Posterior vena cava (tissue), 2 donors: ENCODE measurements at regions of chr19 and their contacts with region 1.

Region 1: DNA sequence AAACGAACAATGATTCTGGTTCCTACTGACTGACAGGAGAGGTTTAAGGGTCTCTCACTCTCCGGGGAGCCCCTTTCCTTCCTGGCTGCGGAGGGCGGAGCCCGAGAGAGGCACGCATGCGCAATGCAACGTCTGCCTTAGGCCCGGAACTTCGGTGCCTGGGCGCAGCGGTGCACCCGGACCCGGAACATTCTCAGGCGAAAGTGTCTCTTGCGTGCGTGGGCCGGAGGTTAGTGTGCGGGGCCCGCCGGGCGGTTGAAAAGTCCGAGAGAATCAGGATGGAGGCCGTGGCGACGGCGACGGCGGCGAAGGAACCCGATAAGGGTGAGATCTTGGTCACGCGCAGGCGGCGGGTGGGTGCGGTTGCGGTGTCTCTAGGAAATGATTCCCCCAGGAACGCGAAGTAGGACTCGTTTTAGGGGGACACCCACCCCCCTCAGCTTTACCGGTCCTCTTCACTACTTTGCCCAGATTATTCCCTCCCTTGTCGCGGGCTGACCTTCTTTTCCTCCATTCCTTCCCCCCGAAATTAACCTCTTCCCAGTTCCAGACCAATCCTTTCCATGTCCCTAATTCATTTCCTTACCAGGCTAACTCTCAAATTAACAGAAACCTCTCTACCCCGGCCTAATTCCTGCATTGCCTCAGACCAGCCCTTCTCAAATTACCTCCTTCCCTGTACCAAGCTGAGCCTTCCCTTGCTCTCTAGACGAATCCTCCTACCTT is at the start of gene CCDC97:
- DNase-seq: peak; percentile 97
- total RNA-seq, gene CCDC97: 17.5 to 23.9 TPM

Region 2: GRCh38 chr19:39539519-39540332 is 1770.5 kb before region 1 on chr19 and contains the start of gene EID2:
- intact Hi-C with region 1: loop called in 1 of 2 experiments (anchors 5 kb)
- DNase-seq: peak; percentile 99
- total RNA-seq, gene EID2: 12.9 to 13.0 TPM

Region 3: DNA sequence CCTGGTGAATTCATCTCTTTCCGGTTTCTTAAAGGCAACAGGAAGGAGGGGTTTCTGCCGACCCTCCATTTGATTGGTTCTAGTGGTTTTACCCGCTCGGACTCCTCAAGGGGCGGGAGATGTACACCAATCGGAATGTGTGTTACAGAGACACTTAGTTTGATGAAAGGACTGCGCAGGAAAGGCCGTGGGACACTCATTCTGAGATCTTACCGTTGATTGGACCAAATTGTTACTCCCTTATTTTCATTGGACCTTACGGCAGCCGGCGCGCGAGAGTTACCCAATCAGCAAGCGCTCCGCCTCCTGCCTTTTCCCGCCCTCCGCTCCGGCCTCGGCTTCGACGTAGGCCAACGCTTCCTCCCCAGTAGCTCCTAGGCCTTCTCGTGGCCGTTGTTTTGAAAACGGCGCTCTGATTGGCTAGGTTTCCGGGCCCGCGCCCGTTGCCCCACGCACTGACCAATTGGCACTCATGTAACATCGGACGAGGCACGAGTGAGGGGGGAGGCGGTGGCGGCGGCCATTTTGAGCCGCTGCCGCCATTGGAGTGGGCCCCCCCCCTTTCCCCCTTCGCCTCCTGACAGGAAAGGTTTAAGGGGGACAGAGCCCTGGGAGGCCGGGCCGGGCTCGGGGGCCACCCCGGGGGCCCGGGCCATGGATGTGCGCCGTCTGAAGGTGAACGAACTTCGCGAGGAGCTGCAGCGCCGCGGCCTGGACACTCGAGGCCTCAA is 46.2 kb before region 1 on chr19 and contains the start of gene HNRNPUL1:
- intact Hi-C with region 1: loop called in 1 of 2 experiments (anchors 5 kb)
- DNase-seq: peak; percentile 99
- total RNA-seq, gene HNRNPUL1: 150 to 157 TPM

Region 4: GRCh38 chr19:41353466-41354342 is 43.5 kb after region 1 on chr19 and contains the start of gene TGFB1:
- intact Hi-C with region 1: loop called in 1 of 2 experiments (anchors 5 kb)
- DNase-seq: peak; percentile 97
- total RNA-seq, gene TGFB1: 43.8 to 61.5 TPM